IMR-90 (cell line): ENCODE measurements at regions of chrX and their contacts with region 1.

Region 1: GRCh38 chrX:40013266-40014195 is 84.2 kb downstream of the BCOR start:
- DNase-seq: peak; percentile 47
- ATAC-seq: peak; percentile 40
- H3K4me3 ChIP-seq: peak overlapping the region; percentile 49
- H3K27ac ChIP-seq: peak overlapping the region; percentile 56
- H3K4me1 ChIP-seq: peaks cover 10% of the 10 kb centered on the region
- H3K27me3 ChIP-seq: peaks cover 4% of the 10 kb centered on the region
- CTCF ChIP-seq: 0 out of 2 replicates have a peak, but pooled peaks have one; percentile 13
- POLR2A ChIP-seq: no peak
- RAD21 ChIP-seq: no peak

Region 2: GRCh38 chrX:39730662-39731397 is 282.7 kb before region 1 on chrX:
- CTCF ChIA-PET with region 1: interaction called, 3 read pairs
- POLR2A ChIA-PET with region 1: no interaction called
- dilution Hi-C with region 1: no loop called
- in situ Hi-C with region 1: no loop called
- intact Hi-C with region 1: loop called (anchors 2 kb)
- DNase-seq: peak; percentile 88
- ATAC-seq: peak; percentile 81
- H3K4me3 ChIP-seq: no peak overlapping the region
- H3K27ac ChIP-seq: no peak overlapping the region
- H3K4me1 ChIP-seq: peaks cover 10% of the 10 kb centered on the region
- H3K27me3 ChIP-seq: peaks cover 21% of the 10 kb centered on the region
- CTCF ChIP-seq: peak; percentile 77
- POLR2A ChIP-seq: peak; percentile 43; the same call in 1 of the 2 replicates
- RAD21 ChIP-seq: peak; percentile 85

Region 3: GRCh38 chrX:39814391-39814790 is 199.1 kb before region 1 on chrX:
- CTCF ChIA-PET with region 1: no interaction called
- POLR2A ChIA-PET with region 1: no interaction called
- dilution Hi-C with region 1: no loop called
- in situ Hi-C with region 1: no loop called
- intact Hi-C with region 1: loop called (anchors 2 kb)
- DNase-seq: peak; percentile 23
- ATAC-seq: peak; percentile 13; the same call in 1 of the 2 replicates
- H3K4me3 ChIP-seq: no peak overlapping the region
- H3K27ac ChIP-seq: no peak overlapping the region
- H3K4me1 ChIP-seq: peaks cover 3% of the 10 kb centered on the region; the same call in 1 of the 2 replicates
- H3K27me3 ChIP-seq: peaks cover 4% of the 10 kb centered on the region; the same call in 1 of the 2 replicates
- CTCF ChIP-seq: peak; percentile 47
- POLR2A ChIP-seq: no peak
- RAD21 ChIP-seq: peak; percentile 61

Region 4: DNA sequence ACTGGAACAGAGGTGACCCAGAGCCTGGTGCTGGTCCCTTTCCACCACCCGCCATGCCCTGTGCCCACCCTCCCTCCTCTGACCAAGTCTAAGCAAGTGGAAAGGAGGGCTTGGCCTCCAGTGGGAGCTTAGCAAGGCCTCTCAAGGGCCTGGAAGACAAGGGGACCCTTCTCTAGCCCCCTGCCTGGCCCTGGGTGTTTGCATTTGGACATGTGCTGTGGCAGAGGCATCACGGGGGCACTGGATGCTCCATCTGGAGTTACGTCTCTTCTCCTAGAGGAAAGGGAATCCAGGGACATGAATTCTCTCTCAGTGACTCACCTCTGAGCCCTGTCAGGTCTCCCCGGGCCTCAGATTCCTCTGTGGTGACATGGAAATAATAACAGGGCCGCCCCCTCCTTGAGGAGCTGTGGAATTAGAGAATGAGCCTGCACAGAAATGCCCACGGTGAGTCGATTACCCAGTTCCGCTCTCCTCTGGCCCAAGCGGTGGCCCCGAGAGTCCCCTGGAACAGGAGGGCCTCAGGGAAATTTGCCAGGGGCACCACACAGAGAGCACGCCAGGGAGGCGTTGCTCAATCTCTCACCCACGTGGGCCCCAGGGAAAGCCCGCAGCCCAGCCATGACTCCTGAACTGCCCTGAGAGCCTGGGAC is 105.4 kb before region 1 on chrX:
- CTCF ChIA-PET with region 1: no interaction called
- POLR2A ChIA-PET with region 1: no interaction called
- dilution Hi-C with region 1: no loop called
- in situ Hi-C with region 1: no loop called
- intact Hi-C with region 1: loop called (anchors 1 kb)
- DNase-seq: peak; percentile 95
- ATAC-seq: peak; percentile 87
- H3K4me3 ChIP-seq: no peak overlapping the region
- H3K27ac ChIP-seq: peak overlapping the region; percentile 82
- H3K4me1 ChIP-seq: peaks cover 20% of the 10 kb centered on the region
- H3K27me3 ChIP-seq: no peaks in the 10 kb centered on the region
- CTCF ChIP-seq: no peak
- POLR2A ChIP-seq: no peak
- RAD21 ChIP-seq: no peak

Region 5: DNA sequence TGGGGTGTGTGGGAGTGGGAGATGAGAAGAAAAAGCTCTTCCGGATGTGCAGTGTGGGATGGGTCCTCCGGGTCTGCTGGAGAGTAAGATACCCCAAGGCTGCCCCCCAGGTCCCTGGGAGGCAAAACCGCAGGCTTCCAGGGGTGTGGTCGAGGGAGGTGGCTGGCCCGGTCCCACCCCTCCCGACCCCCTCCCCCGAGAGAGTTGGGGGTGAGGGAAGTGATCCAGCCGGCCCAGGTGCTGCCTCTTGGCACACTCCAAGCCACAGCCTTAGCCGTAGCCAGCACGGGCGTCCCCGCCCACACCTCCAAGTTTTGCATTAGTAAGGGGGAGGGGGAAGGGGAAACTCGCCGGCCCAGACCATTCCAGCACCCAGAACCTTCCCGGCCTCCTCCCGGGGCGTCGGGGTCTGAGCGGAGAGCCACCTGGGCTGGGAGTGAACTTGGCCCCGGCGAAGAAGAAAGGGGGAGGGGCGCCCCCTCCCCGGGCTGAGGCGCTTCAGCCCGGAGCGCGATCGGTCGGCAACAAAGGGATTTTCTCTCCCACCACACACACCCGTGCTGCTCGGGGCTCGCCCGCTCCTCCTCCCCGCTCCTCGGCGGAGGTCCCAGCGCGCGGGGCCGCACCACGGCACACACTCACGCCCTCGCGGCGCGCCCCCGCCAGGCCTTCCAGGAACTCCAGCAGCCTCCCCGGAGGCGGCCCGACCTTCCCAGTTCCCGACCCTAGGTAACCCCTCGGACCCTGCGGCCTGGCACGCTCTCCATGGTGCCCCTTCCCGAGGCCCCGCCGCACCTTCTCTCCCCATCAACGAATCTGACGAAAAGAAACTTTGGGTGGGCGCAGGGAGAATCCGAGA is 69.8 kb after region 1 on chrX:
- CTCF ChIA-PET with region 1: no interaction called
- POLR2A ChIA-PET with region 1: no interaction called
- dilution Hi-C with region 1: no loop called
- in situ Hi-C with region 1: no loop called
- intact Hi-C with region 1: loop called (anchors 5 kb)
- DNase-seq: no peak
- ATAC-seq: no peak
- H3K4me3 ChIP-seq: peak overlapping the region; percentile 20
- H3K27ac ChIP-seq: no peak overlapping the region
- H3K4me1 ChIP-seq: peaks cover 19% of the 10 kb centered on the region
- H3K27me3 ChIP-seq: no peaks in the 10 kb centered on the region
- CTCF ChIP-seq: no peak
- POLR2A ChIP-seq: no peak
- RAD21 ChIP-seq: no peak

Region 6: DNA sequence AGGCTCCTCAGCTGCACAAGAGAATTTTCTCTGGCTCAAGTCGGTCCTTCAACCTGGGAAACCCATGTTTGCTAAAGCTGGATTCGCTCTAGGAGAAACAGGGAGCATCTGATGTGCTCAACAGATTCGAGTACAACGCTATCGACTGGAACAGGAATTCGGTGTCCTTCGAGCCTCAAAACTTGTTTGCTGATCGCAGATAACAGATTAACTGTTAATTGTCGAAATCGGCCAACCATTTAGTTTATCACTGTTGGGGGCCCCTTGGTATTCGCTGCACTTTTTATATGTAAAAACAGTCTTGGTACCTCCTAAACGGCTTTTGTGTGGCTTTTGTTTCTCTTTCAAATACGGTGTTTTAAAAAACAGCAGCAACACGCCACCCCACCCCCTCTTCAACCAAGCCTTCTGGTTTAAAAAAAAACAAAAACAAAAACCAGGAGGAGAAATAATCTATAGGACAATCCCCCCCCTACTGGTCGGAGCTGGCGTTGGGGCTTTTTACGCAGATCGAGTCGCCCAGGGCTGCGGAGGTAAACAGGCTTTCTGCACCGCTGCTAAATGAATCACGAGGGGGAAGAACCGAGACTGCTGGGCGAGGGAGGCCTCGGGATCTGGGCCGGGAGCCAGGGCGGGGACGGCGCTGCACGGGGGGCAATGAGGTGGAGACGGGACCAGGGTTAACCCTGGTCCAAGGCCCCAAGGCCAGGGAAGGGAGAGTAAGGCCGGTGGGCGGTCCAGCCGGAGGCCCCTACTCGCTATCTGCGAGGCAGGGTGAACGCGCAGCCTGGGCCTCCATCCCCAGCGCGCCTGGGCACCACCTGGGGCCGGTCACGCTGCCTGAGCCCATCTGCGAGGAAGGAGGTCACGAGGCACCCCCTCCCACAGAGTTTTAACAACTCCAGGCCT is 155.9 kb after region 1 on chrX:
- CTCF ChIA-PET with region 1: no interaction called
- POLR2A ChIA-PET with region 1: no interaction called
- dilution Hi-C with region 1: no loop called
- in situ Hi-C with region 1: no loop called
- intact Hi-C with region 1: loop called (anchors 2 kb)
- DNase-seq: peak; percentile 75
- ATAC-seq: peak; percentile 73
- H3K4me3 ChIP-seq: no peak overlapping the region
- H3K27ac ChIP-seq: no peak overlapping the region
- H3K4me1 ChIP-seq: no peaks in the 10 kb centered on the region; the same call in 1 of the 2 replicates
- H3K27me3 ChIP-seq: peaks cover 21% of the 10 kb centered on the region
- CTCF ChIP-seq: peak; percentile 64
- POLR2A ChIP-seq: no peak
- RAD21 ChIP-seq: peak; percentile 56